ENCODE measurements at regions of chr12 and their contacts with region 1.

Region 1: GRCh38 chr12:49580572-49581535 is 12.9 kb upstream of the MCRS1 start:
- DNase-seq: peak; percentile 71
- ATAC-seq: peak; percentile 97
- H3K4me3 ChIP-seq: no peak overlapping the region
- H3K27ac ChIP-seq: no peak overlapping the region; the same call in 1 of the 2 replicates
- H3K4me1 ChIP-seq: peaks cover 7 to 11% of the 10 kb centered on the region in 2 experiments; a peak in 3 of 4 replicates
- H3K27me3 ChIP-seq: no peaks in the 10 kb centered on the region
- CTCF ChIP-seq: peak; percentile 90 to 92 (median 91)
- POLR2A ChIP-seq: no peak
- RAD21 ChIP-seq: peak; percentile 96

Region 2: GRCh38 chr12:49288412-49288853 is 292.4 kb before region 1 on chr12:
- CTCF ChIA-PET with region 1: interaction called, 14 read pairs
- POLR2A ChIA-PET with region 1: no interaction called
- RAD21 ChIA-PET with region 1: no interaction called
- intact Hi-C with region 1: loop called (anchors 1 kb)
- DNase-seq: peak; percentile 46
- ATAC-seq: peak; percentile 74
- H3K4me3 ChIP-seq: no peak overlapping the region
- H3K27ac ChIP-seq: no peak overlapping the region
- H3K4me1 ChIP-seq: peaks cover 0 to 10% of the 10 kb centered on the region in 2 experiments; a peak in 2 of 4 replicates
- H3K27me3 ChIP-seq: no peaks in the 10 kb centered on the region
- CTCF ChIP-seq: peak; percentile 76 to 97 (median 89)
- POLR2A ChIP-seq: no peak
- RAD21 ChIP-seq: peak; percentile 92

Region 3: GRCh38 chr12:49331380-49332222 is 249.3 kb before region 1 on chr12:
- CTCF ChIA-PET with region 1: interaction called, 20 read pairs
- POLR2A ChIA-PET with region 1: interaction called, 4 read pairs
- RAD21 ChIA-PET with region 1: interaction called, 3 to 8 read pairs
- intact Hi-C with region 1: no loop called
- DNase-seq: peak; percentile 43
- ATAC-seq: peak; percentile 84
- H3K4me3 ChIP-seq: no peak overlapping the region
- H3K27ac ChIP-seq: peak overlapping the region; percentile 35
- H3K4me1 ChIP-seq: peaks cover 4 to 11% of the 10 kb centered on the region in 2 experiments; a peak in 2 of 4 replicates
- H3K27me3 ChIP-seq: no peaks in the 10 kb centered on the region
- CTCF ChIP-seq: peak; percentile 79 to 87 (median 86)
- POLR2A ChIP-seq: no peak
- RAD21 ChIP-seq: peak; percentile 86

Region 4: GRCh38 chr12:49553512-49554088 is 27.3 kb before region 1 on chr12:
- CTCF ChIA-PET with region 1: interaction called, 13 read pairs
- POLR2A ChIA-PET with region 1: no interaction called
- RAD21 ChIA-PET with region 1: no interaction called
- intact Hi-C with region 1: no loop called
- DNase-seq: peak; percentile 45
- ATAC-seq: peak; percentile 75
- H3K4me3 ChIP-seq: no peak overlapping the region
- H3K27ac ChIP-seq: no peak overlapping the region
- H3K4me1 ChIP-seq: peaks cover 0 to 5% of the 10 kb centered on the region in 2 experiments; a peak in 2 of 4 replicates
- H3K27me3 ChIP-seq: no peaks in the 10 kb centered on the region
- CTCF ChIP-seq: peak; percentile 80 to 99 (median 81)
- POLR2A ChIP-seq: no peak
- RAD21 ChIP-seq: peak; percentile 94

Region 5: GRCh38 chr12:49567611-49568441 is 13.0 kb before region 1 on chr12 and contains the start of gene MCRS1:
- CTCF ChIA-PET with region 1: interaction called, 15 read pairs
- POLR2A ChIA-PET with region 1: no interaction called
- RAD21 ChIA-PET with region 1: no interaction called
- intact Hi-C with region 1: no loop called
- DNase-seq: peak; percentile 86
- ATAC-seq: peak; percentile 80
- H3K4me3 ChIP-seq: peak within 1 kb of the TSS; percentile 98 to 100
- H3K27ac ChIP-seq: peak within 1 kb of the TSS; percentile 67
- H3K4me1 ChIP-seq: peaks cover 8 to 15% of the 10 kb centered on the region in 2 experiments; a peak in 3 of 4 replicates
- H3K27me3 ChIP-seq: no peaks in the 10 kb centered on the region
- CTCF ChIP-seq: no peak
- POLR2A ChIP-seq: peak; percentile 81
- RAD21 ChIP-seq: no peak
- total RNA-seq, gene MCRS1: 91.9 TPM

Region 6: DNA sequence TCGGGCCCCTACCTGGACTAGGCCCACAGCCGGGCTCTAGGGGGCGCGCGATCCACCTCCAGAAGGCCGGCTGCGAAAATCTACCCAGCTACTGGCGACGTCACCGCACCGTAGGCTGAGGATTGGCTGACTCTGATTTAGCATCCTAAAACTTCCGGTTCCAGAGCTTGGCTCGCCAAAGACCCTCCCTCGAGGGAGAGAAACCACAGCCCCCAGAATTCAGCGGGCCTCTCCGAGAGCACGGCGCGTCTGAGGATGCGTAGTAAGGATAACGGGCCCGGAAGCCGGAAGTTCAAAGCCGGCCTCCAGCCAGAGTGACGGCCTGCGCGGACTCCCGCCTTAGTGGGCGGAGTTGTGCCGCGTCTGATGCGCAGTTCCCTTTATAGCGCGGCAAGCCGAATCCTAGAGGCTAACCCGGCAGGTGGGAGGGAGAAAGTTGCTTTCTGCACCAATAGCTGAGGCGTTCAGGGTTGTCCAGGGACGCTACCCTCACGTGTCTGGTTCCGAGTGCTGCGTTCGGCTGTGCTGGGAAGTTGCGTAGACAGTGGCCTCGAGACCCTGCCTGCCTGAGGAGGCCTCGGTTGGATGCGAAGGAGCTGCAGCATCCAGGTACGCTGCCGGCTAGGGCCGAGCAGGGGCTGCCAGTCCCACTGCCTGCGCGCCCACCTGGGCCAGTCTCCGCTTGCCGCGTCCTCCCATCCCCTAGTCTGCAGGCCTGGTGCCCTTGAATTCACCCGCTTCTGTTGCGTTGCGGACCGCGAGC is 531.0 kb after region 1 on chr12 and contains the start of gene COX14:
- CTCF ChIA-PET with region 1: no interaction called
- POLR2A ChIA-PET with region 1: no interaction called
- RAD21 ChIA-PET with region 1: no interaction called
- intact Hi-C with region 1: no loop called
- DNase-seq: peak; percentile 99
- ATAC-seq: peak; percentile 90
- H3K4me3 ChIP-seq: peak within 1 kb of the TSS; percentile 93 to 99
- H3K27ac ChIP-seq: peak within 1 kb of the TSS; percentile 77
- H3K4me1 ChIP-seq: peaks cover 20 to 22% of the 10 kb centered on the region in 2 experiments
- H3K27me3 ChIP-seq: no peaks in the 10 kb centered on the region
- CTCF ChIP-seq: peak; percentile 83 to 94 (median 91); a peak in 5 of 6 replicates
- POLR2A ChIP-seq: peak; percentile 78
- RAD21 ChIP-seq: peak; percentile 70
- total RNA-seq, gene COX14: 41.0 TPM